ENCODE measurements at regions of chr7 and their contacts with region 1.

Region 1: GRCh38 chr7:137454246-137454724 is 110.8 kb upstream of the PTN start:
- DNase-seq: peak; percentile 70
- ATAC-seq: peak; percentile 82
- H3K4me3 ChIP-seq: no peak overlapping the region
- H3K27ac ChIP-seq: peak overlapping the region; percentile 86
- H3K4me1 ChIP-seq: peaks cover 7% of the 10 kb centered on the region
- H3K27me3 ChIP-seq: no peaks in the 10 kb centered on the region
- CTCF ChIP-seq: peak; percentile 72
- POLR2A ChIP-seq: no peak
- RAD21 ChIP-seq: peak; percentile 72

Region 2: GRCh38 chr7:136883046-136883445 is 571.2 kb before region 1 on chr7:
- CTCF ChIA-PET with region 1: no interaction called
- POLR2A ChIA-PET with region 1: no interaction called
- dilution Hi-C with region 1: no loop called
- in situ Hi-C with region 1: loop called (anchors 10 kb)
- intact Hi-C with region 1: loop called (anchors 5 kb)
- DNase-seq: peak; percentile 52
- ATAC-seq: no peak
- H3K4me3 ChIP-seq: no peak overlapping the region
- H3K27ac ChIP-seq: peak overlapping the region; percentile 49; the same call in 1 of the 2 replicates
- H3K4me1 ChIP-seq: peaks cover 10% of the 10 kb centered on the region
- H3K27me3 ChIP-seq: no peaks in the 10 kb centered on the region
- CTCF ChIP-seq: peak; percentile 22; the same call in 1 of the 2 replicates
- POLR2A ChIP-seq: no peak
- RAD21 ChIP-seq: no peak

Region 3: DNA sequence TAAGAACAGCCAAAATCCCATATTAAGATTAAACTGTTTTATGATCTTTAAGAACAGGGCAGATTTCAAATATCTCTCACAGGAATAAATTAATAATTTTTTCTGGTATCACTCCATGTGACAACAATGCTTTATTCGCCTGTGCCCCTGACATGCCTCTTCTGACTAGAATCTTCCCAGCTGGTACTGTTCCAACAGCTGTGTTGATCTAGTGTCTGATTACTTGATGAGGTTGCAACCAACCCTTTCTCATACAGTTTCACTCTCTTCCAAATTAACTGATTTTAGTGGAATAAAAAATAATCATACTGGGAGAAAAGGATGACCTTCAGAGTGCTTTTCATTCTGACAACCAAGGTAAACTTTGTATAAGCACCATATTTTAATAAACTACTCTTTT is 433.9 kb before region 1 on chr7:
- CTCF ChIA-PET with region 1: no interaction called
- POLR2A ChIA-PET with region 1: no interaction called
- dilution Hi-C with region 1: no loop called
- in situ Hi-C with region 1: no loop called
- intact Hi-C with region 1: loop called (anchors 5 kb)
- DNase-seq: peak; percentile 45
- ATAC-seq: no peak
- H3K4me3 ChIP-seq: no peak overlapping the region
- H3K27ac ChIP-seq: peak overlapping the region; percentile 34; the same call in 1 of the 2 replicates
- H3K4me1 ChIP-seq: peaks cover 8% of the 10 kb centered on the region
- H3K27me3 ChIP-seq: no peaks in the 10 kb centered on the region
- CTCF ChIP-seq: no peak
- POLR2A ChIP-seq: no peak
- RAD21 ChIP-seq: no peak

Region 4: GRCh38 chr7:137164251-137164650 is 290.0 kb before region 1 on chr7:
- CTCF ChIA-PET with region 1: interaction called, 13 read pairs
- POLR2A ChIA-PET with region 1: interaction called, 3 read pairs
- dilution Hi-C with region 1: no loop called
- in situ Hi-C with region 1: loop called (anchors 5 kb)
- intact Hi-C with region 1: loop called (anchors 1 kb)
- DNase-seq: no peak
- ATAC-seq: no peak
- H3K4me3 ChIP-seq: no peak overlapping the region
- H3K27ac ChIP-seq: no peak overlapping the region
- H3K4me1 ChIP-seq: peaks cover 4% of the 10 kb centered on the region
- H3K27me3 ChIP-seq: no peaks in the 10 kb centered on the region
- CTCF ChIP-seq: no peak
- POLR2A ChIP-seq: no peak
- RAD21 ChIP-seq: no peak